Endothelial cell of umbilical vein (primary cell): ENCODE measurements at regions of chr2 and their contacts with region 1.

Region 1: DNA sequence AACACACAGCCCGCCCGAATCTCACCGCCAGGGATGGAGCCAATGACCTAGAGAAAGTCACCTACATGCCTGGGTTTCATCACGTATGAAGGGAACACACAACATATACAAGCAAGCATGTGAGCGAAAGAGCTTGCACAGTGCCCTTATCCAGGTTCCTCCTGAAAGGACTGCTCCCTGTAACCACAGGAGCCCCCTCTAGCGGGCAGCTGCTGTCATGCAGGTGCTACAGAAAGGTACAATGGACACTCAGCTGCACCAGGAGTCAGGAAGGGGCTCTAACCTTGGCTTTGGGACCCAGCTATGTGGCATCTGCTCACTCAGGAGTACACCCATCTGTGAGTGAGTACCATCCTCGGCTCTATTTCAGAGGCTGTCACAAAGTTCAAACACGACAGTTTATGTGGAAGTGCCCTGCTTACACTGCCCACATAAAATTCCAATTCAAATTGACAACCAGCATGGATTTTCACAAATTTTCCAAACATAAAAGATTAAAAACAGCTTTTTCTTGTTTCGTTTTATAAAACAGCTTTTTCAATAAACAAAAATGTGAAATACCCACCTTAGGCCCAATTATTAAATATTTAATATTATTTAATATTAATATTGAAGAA is 3.5 kb downstream of the NDUFA10 start:
- DNase-seq: peak; percentile 65
- H3K4me3 ChIP-seq: no peak overlapping the region
- H3K27ac ChIP-seq: no peak overlapping the region
- H3K4me1 ChIP-seq: peaks cover 10% of the 10 kb centered on the region
- H3K27me3 ChIP-seq: no peaks in the 10 kb centered on the region
- CTCF ChIP-seq: peak; percentile 95 to 97
- POLR2A ChIP-seq: no peak

Region 2: GRCh38 chr2:240136013-240136670 is 114.5 kb after region 1 on chr2 and contains the start of gene COPS9:
- CTCF ChIA-PET with region 1: no interaction called
- POLR2A ChIA-PET with region 1: no interaction called
- dilution Hi-C with region 1: no loop called
- intact Hi-C with region 1: loop called (anchors 1 kb)
- DNase-seq: peak; percentile 85
- H3K4me3 ChIP-seq: peak within 1 kb of the TSS; percentile 55 to 71 (median 59)
- H3K27ac ChIP-seq: peak within 1 kb of the TSS; percentile 58
- H3K4me1 ChIP-seq: peaks cover 9% of the 10 kb centered on the region
- H3K27me3 ChIP-seq: no peaks in the 10 kb centered on the region
- CTCF ChIP-seq: no peak
- POLR2A ChIP-seq: peak; percentile 72
- total RNA-seq, gene COPS9: 189 and 196 TPM in 2 replicates